ENCODE measurements at regions of chr7 and their contacts with region 1.

Region 1: DNA sequence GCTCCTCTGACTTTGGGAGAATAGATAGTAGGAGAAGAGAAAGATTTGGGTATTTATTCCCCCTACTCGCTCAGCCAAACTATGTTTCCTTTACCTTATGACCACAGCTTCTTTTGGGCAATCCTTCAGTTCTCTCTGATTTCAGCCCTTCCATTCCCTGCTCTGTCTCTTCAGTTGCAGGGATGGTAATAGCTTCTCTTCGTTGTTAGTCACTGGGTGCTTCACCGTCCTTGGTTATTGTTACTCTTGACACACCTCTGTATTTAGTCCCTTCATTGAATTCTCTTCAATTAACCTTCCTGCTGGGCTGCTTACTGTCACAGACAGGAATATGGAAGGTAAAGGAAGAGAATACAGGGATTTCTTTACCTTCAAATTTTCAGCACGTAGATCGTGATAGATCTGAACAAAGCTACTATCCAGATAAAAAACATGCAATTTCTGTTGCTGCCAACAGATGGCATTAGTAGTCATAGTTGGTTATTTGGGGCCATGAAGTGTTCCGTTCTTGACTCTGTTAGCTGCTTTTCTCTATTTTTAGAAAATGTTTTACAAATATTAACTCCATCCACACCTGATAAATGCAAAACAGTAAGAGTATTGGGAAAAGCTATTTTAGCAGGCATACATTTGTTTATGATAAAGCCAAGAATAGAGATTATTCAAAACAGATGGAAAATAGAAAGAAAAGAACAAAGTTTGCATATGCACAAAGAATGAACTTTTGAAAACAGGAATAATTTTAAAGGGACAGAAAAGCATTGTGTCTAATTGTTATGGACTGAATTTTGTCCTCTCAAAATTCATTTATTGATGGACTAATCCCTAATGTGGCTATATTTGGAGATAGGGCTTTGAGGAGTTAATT is 14.0 kb upstream of the PTTG1IP2 start:
- DNase-seq: no peak
- H3K4me3 ChIP-seq: peak overlapping the region; percentile 10 to 20
- H3K27ac ChIP-seq: no peak overlapping the region
- H3K4me1 ChIP-seq: peaks cover 0 to 8% (median 2%) of the 10 kb centered on the region in 4 donors
- H3K27me3 ChIP-seq: no peaks in the 10 kb centered on the region
- CTCF ChIP-seq: peak; percentile 60 to 76

Region 2: DNA sequence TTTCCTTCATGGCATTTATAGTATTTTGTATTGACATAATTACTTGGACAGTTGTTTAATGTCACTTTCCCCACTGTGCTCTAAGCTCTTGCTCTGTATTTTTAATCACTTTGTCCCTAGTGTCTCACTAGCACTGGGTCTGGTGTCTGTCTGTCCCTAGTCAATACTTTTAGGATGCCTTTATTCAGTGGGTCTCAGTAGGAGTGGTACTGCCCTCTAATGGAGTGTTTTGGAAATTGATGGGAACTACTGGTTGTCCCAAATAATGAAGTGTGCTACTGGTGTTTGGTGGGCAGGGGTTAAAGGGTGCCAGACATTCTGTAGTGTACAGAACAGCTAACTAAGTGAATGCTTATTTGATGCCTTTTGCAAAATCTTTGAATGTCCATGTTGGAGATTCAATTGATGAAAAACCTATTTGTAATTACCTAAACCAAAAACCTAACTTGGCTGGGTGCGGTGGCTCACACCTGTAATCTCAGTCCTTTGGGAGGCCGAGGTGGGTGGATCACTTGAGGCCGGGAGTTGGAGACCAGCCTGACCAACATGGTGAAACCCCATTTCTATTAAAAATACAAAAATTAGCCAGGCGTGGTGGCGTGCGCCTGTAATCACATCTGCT is 174.0 kb after region 1 on chr7:
- intact Hi-C with region 1: loop called (anchors 10 kb)
- DNase-seq: no peak
- H3K4me3 ChIP-seq: no peak overlapping the region
- H3K27ac ChIP-seq: no peak overlapping the region
- H3K4me1 ChIP-seq: peaks cover 0 to 18% (median 10%) of the 10 kb centered on the region in 4 donors
- H3K27me3 ChIP-seq: no peaks in the 10 kb centered on the region
- CTCF ChIP-seq: peak; percentile 53 to 54

Region 3: DNA sequence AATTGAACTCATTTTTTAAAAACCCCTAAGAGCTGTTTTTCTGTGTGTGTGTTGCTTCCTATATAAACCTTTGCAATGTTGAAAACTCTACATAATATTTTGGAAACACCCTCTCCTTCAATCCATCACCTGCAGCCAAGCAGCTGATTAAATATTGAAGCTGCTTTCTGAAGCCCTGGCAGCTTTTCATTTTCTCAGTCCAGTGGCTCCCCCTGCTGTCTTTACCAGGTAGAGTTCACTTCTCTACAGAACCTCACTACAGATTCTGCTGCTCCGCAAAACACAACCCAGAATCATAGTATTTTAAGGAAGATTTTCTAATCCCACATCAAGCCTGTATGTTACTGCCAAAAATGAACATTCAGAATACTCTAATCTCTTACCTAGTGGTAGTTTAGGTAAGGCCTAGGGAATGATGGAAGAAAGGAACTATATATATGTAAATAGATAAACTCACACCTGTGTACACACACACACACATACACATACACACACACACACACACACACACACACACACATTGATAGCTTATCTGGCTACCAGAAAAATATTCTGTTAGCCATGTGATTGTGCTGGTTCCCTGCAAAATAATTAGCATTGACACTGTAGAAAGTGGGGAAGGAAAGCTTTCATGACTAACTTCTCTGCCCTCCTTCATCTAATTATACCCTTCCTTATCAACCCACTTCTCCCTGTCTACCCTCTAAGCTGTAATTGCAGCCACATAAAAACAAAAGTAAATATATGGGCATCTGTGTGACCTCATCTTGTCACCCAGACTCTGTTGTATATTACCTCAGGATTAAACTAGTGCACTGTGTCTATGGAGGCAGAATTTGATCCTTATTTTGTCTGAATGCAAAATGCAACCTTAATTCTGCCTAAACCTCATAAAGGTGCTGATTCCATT is 579.3 kb after region 1 on chr7:
- intact Hi-C with region 1: loop called (anchors 10 kb)
- DNase-seq: peak; percentile 60 to 65
- H3K4me3 ChIP-seq: no peak overlapping the region
- H3K27ac ChIP-seq: peak overlapping the region in 1 of 2 donors; percentile 6
- H3K4me1 ChIP-seq: peaks cover 0 to 18% (median 9%) of the 10 kb centered on the region in 4 donors
- H3K27me3 ChIP-seq: no peaks in the 10 kb centered on the region
- CTCF ChIP-seq: peak; percentile 64 to 73

Region 4: DNA sequence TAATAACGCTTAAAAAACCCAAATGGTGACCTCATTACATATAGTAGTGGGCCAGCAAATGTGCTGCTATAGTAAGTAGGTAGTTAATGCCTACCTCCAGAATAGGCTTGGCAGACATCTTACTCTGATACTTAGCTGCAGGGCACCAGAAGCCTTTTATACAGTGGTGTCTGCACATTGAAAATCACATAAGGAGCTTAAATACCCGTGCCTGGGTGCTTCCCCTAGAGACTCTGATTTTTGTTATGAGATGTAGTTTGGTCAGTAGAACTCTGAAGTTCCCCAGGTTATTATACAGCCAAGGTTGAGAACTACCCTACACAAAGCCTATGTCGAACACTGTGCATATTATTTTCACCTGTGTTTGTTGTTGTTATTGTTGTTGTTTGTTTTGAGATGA is 1837.6 kb after region 1 on chr7:
- intact Hi-C with region 1: loop called (anchors 10 kb)
- DNase-seq: no peak
- H3K4me3 ChIP-seq: no peak overlapping the region
- H3K27ac ChIP-seq: no peak overlapping the region
- H3K4me1 ChIP-seq: peaks cover 0 to 32% (median 2%) of the 10 kb centered on the region in 4 donors
- H3K27me3 ChIP-seq: no peaks in the 10 kb centered on the region
- CTCF ChIP-seq: no peak

Measured in tibial artery (tissue), 4 donors.